PC-3 (cell line): ENCODE measurements at regions of chr10 and their contacts with region 1.

Region 1: GRCh38 chr10:131925011-131925649 is 24.3 kb downstream of the PPP2R2D start:
- DNase-seq: peak; percentile 29
- ATAC-seq: no peak; the same call in 1 of the 2 replicates
- H3K4me3 ChIP-seq: no peak overlapping the region
- H3K27ac ChIP-seq: no peak overlapping the region
- H3K4me1 ChIP-seq: peaks cover 6% of the 10 kb centered on the region; the same call in 1 of the 2 replicates
- H3K27me3 ChIP-seq: no peaks in the 10 kb centered on the region
- CTCF ChIP-seq: no peak

Region 2: DNA sequence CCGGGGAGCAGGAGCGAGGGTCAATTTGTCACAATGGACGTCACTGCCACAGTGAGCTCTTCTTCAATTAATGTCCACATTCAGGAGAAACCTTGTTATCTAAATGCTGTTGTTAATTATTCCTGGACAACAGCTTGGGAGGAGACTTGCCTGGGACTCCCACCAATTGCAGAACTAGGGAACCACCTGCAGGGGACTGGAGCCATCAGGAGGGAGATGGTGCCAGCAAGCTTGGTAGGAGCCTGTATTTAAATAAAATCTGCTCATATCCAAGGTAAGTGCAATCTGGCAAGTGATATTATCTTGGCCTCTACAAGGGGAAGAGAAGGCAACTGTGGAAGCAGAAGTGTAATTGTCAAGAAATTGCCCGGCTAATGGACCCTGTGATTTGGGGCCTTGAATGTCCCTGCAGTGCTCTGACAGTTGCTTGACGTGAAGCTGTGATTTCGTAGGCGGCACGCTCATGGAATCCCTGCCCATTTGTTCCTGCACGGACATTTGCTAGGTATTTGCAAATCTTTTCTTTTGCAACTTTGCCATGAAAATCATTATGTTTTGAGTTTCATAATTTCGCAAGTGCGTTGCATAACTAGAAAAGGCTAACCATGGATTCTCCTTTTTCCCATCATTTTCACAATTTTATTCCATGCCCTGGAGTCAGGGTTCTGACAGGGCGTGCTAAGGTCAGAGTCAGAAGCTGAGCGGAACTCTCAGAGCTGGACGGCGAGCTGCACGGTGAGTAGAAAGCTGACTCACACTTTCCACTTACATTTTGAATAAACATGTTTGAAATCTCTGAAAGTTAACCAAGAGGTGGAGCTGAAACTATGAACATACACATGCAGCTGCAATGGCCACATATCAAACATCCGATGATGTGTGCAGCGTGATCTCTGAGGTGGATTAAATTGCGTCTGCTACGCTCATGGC is 528.7 kb before region 1 on chr10:
- CTCF ChIA-PET with region 1: no interaction called
- POLR2A ChIA-PET with region 1: no interaction called
- intact Hi-C with region 1: no loop called
- DNase-seq: no peak
- ATAC-seq: no peak
- H3K4me3 ChIP-seq: no peak overlapping the region
- H3K27ac ChIP-seq: no peak overlapping the region
- H3K4me1 ChIP-seq: no peaks in the 10 kb centered on the region
- H3K27me3 ChIP-seq: 0 out of 2 replicates have a peak, but pooled peaks cover 9% of the 10 kb centered on the region
- CTCF ChIP-seq: no peak

Region 3: DNA sequence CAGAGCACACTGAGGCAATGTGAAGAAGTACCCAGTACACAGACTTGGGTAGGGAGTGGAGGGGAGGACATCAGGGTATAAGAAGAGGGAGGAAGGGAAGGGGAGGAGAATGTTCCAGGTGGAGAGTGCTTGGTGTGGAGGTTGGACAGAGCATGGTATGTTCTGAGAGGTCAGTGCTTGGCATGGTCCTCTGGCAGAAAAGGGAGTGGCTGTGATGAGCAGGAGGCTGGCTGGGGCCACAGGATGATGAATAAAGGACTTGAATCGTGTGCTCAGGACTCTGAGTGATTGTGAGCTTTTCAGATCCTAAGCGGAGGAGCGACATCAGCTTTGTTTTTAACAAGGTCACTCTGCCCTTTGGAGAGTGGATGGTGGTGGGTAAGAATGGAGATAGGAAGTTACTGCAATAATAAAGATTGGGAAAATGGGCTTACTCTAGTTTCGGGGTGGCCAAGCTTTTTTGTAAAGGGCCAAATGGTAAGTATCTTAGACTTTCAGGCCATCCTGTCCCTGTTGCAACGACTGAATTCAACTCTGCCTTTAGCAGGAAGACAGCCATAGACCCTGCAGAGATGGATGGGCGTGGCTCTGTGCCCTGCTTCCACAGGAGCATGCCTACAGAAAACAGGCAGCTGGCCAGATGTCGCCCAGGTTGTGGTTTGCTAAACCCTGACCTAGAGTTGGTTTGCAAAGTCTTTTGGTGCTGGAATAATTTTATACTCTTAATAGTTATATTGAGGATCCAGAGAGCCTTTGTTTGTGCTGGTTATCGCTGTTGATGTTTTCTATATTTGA is 15.9 kb before region 1 on chr10:
- CTCF ChIA-PET with region 1: no interaction called
- POLR2A ChIA-PET with region 1: no interaction called
- intact Hi-C with region 1: loop called (anchors 2 kb)
- DNase-seq: peak; percentile 4
- ATAC-seq: no peak
- H3K4me3 ChIP-seq: no peak overlapping the region
- H3K27ac ChIP-seq: no peak overlapping the region
- H3K4me1 ChIP-seq: peaks cover 39% of the 10 kb centered on the region
- H3K27me3 ChIP-seq: no peaks in the 10 kb centered on the region
- CTCF ChIP-seq: no peak